Activated naive CD4-positive, alpha-beta T cell treated with anti-CD3 and anti-CD28 coated beads, Interleukin-2, amount 10 ng/mL, durations not matched to agents 7 days and 5 days (primary cell): ENCODE measurements at regions of chr1 and their contacts with region 1.

Region 1: DNA sequence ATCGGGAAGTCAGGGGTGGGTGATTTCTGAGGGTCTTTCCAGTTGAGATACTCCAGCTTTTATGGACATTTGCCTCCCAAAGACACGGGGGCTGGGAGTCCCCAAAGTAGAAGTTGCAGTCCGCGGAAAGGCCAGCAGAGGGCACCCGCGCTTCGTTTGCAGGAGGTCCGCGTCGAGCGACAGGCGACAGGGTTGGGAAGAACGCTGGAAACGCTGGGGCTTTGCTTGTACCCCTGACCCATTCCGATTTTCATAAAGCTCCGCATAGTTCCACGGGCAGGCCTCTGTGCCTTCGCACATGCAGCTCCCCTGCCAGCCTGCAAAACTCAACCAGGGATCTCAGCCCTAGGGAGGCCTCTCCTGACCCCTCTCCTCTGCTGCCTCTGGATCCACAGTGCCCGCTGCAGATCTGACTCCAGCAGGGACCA is 44.2 kb upstream of the LAPTM5 start:
- DNase-seq: peak; percentile 84
- H3K4me3 Mint-ChIP-seq: no peak overlapping the region
- H3K27ac Mint-ChIP-seq: no peak overlapping the region
- H3K4me1 Mint-ChIP-seq: peaks cover 2% of the 10 kb centered on the region
- H3K27me3 Mint-ChIP-seq: peaks cover 57% of the 10 kb centered on the region

Region 2: DNA sequence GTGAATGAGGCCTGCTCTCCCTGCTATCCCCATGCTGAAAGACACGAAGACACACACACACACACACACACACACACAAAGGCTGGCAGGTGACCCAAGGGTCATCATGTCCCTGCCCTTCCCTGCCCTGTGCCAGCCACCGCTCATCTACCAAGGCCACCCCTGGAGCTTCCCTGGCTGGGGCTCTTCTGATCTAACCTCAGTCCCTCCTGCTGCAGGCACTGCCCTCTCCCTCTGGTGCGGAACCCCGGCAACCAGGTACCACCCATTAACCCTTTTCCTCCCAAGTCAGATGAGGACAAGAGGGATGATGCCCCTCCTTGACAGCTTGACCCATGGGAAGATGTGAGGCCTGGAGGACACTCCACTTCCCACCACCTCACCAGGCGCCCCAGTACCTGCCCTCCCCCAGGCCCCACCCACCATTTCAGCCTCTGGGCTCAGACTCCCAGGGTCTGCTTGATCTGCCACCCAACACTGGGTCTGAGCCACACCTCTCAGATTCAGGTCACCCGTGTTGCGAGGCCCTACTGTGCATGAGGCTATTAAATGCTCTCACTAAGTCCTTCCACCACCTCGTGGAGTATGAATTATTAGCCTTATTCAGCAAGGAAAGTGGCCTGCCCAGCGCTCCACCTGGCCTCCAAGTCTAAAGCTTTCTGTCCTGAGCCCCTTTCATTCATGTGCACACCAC is 104.3 kb after region 1 on chr1:
- CTCF ChIA-PET with region 1: interaction called, 150 read pairs
- DNase-seq: no peak
- H3K4me3 Mint-ChIP-seq: no peak overlapping the region
- H3K27ac Mint-ChIP-seq: no peak overlapping the region
- H3K4me1 Mint-ChIP-seq: peaks cover 14% of the 10 kb centered on the region
- H3K27me3 Mint-ChIP-seq: peaks cover 77% of the 10 kb centered on the region

Region 3: GRCh38 chr1:30911046-30911954 is 109.5 kb after region 1 on chr1:
- CTCF ChIA-PET with region 1: interaction called, 150 read pairs
- DNase-seq: peak; percentile 74
- H3K4me3 Mint-ChIP-seq: no peak overlapping the region
- H3K27ac Mint-ChIP-seq: no peak overlapping the region
- H3K4me1 Mint-ChIP-seq: peaks cover 18% of the 10 kb centered on the region
- H3K27me3 Mint-ChIP-seq: peaks cover 61% of the 10 kb centered on the region

Region 4: DNA sequence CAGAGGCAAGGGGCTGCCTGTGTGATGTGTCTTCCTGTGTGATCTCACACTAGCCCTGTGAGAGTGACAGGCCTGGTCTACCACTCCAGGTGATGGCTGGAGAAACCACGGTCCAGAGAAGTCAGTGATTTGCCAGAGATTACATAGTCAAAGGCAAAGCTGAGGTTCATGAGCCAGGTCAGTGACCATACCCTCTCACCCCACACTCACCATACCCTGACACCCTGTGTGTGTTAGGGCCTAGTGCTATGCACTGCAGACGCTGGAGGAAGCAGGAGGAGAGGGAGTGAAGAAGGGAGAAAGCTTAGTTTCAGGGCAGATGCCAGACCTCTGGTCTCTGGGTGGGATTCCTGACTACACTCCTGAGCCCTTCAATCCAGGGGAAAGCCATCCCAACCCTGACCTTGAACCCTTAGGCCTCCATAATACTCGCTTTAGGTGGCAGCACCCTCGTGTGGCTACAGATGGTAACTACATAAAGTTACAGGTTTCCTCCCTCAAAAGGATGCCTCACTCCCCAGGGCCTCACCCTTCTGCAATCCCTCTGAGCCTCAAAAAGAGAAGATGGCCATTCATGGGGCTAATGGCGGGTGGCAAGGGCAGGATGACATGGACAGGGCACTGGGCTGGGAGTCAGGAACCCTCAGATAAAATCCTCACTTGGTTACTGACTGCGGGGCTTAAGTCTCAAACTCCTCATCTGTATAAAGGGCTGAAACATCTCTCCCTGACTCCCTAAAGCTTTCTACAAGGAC is 127.5 kb after region 1 on chr1:
- CTCF ChIA-PET with region 1: interaction called, 61 read pairs
- DNase-seq: peak; percentile 71
- H3K4me3 Mint-ChIP-seq: no peak overlapping the region
- H3K27ac Mint-ChIP-seq: no peak overlapping the region
- H3K4me1 Mint-ChIP-seq: no peaks in the 10 kb centered on the region
- H3K27me3 Mint-ChIP-seq: no peaks in the 10 kb centered on the region